Dendritic cell treated with granulocyte-macrophage colony-stimulating factor and Interleukin-4, amounts not matched to agents 40 ng/mL and 50 ng/mL, for 4 days (primary cell): ENCODE measurements at regions of chr15 and their contacts with region 1.

Region 1: DNA sequence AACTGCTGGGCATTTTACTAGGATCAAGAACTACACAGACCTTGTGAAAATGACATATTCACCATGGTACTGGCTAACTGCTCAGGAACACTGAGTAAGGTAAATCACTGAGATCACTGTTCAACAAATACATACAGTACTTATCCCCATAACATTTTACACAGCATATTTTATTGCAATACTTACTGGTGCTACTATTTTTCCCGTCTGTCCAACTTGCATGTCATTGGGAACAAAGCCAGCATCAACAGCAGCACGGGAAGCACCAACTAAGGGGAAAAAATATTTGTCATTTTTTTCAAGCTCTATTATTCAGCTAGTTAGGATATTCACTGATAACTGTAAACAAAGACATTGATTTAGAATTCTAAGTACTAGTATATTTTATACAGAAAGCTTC is 37.0 kb downstream of the ETFA start:
- H3K4me3 Mint-ChIP-seq: no peak overlapping the region
- H3K27ac Mint-ChIP-seq: no peak overlapping the region
- H3K4me1 Mint-ChIP-seq: peaks cover 5% of the 10 kb centered on the region
- H3K27me3 Mint-ChIP-seq: no peaks in the 10 kb centered on the region

Region 2: GRCh38 chr15:76057332-76058000 is 216.8 kb before region 1 on chr15:
- intact Hi-C with region 1: no loop called
- H3K4me3 Mint-ChIP-seq: peak overlapping the region; percentile 34
- H3K27ac Mint-ChIP-seq: no peak overlapping the region
- H3K4me1 Mint-ChIP-seq: peaks cover 24% of the 10 kb centered on the region
- H3K27me3 Mint-ChIP-seq: peaks cover 31% of the 10 kb centered on the region

Region 3: DNA sequence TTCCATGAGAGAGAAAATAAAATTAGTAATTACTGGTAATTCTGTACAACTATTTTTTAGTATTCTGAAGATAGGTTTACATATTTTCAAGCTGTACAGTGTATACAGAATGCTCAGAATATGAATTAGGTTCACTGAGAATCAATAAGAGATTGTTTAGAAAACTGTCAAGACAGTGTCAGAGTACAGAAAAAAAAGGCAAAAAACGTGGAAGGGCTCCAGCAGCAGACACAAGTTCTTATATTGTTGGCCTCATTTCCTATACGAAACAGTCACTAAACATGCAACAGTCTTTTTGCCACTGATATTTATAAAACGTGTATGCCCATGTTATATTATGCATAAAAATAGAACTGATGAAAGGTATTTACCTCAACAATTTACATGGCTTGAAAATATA is 166.2 kb after region 1 on chr15:
- intact Hi-C with region 1: loop called (anchors 10 kb)
- H3K4me3 Mint-ChIP-seq: no peak overlapping the region
- H3K27ac Mint-ChIP-seq: no peak overlapping the region
- H3K4me1 Mint-ChIP-seq: no peaks in the 10 kb centered on the region
- H3K27me3 Mint-ChIP-seq: no peaks in the 10 kb centered on the region

Region 4: GRCh38 chr15:77243135-77243534 is 968.9 kb after region 1 on chr15:
- intact Hi-C with region 1: no loop called
- H3K4me3 Mint-ChIP-seq: no peak overlapping the region
- H3K27ac Mint-ChIP-seq: no peak overlapping the region
- H3K4me1 Mint-ChIP-seq: peaks cover 7% of the 10 kb centered on the region
- H3K27me3 Mint-ChIP-seq: no peaks in the 10 kb centered on the region